ENCODE measurements at regions of chr11 and their contacts with region 1.

Region 1: GRCh38 chr11:48099906-48100446 is 116.6 kb upstream of the OR4B1 start:
- DNase-seq: no peak
- H3K4me3 ChIP-seq: no peak overlapping the region
- H3K27ac ChIP-seq: no peak overlapping the region
- H3K4me1 ChIP-seq: no peaks in the 10 kb centered on the region
- H3K27me3 ChIP-seq: no peaks in the 10 kb centered on the region
- CTCF ChIP-seq: no peak
- POLR2A ChIP-seq: no peak

Region 2: DNA sequence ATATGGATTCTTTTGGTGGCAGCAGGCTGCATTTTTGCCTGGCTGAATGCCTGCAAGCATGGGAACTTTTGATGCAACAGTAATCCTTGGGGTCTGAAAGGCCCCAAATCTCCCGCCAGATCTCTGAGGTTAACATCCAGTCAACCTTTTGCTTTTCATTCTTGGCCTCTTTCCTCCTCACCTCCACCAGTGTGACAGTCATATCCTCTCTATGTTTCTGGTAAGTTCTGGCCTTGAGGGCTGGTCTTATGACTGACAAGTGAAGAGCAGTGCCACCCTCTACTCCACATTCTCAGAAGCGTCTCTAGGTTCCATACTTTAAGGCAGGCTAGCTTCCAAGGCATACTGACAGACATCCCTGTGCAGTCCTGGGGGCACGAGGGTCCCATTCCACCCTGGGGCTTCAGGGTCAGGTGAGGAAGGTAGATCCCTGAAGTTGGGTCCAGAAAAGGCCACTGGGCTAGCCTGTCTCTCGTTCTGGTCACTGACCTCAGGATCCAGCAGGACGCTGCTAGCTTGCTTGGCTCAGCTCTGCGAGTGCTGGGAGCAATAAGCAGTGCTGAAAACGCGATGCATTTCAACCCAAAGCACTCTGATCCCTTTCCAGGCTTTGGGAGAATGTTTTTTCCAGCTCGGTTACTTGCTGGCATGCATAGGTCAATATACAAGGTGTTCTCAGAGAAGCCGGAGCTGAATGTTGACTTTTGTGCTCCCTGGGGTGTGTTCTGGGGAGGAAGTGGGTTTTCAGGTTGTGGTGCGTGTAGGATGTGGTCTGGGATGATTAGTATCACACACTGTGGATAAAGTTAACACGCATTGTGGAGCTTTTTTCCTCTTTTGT is 44.5 kb before region 1 on chr11:
- intact Hi-C with region 1: loop called (anchors 1 kb)
- DNase-seq: peak in 1 of 2 donors; percentile 49
- H3K4me3 ChIP-seq: peak overlapping the region in 1 of 3 donors; percentile 41
- H3K27ac ChIP-seq: peak overlapping the region; percentile 73 to 81
- H3K4me1 ChIP-seq: peaks cover 0 to 10% of the 10 kb centered on the region in 2 donors
- H3K27me3 ChIP-seq: no peaks in the 10 kb centered on the region
- CTCF ChIP-seq: no peak
- POLR2A ChIP-seq: no peak

Region 3: DNA sequence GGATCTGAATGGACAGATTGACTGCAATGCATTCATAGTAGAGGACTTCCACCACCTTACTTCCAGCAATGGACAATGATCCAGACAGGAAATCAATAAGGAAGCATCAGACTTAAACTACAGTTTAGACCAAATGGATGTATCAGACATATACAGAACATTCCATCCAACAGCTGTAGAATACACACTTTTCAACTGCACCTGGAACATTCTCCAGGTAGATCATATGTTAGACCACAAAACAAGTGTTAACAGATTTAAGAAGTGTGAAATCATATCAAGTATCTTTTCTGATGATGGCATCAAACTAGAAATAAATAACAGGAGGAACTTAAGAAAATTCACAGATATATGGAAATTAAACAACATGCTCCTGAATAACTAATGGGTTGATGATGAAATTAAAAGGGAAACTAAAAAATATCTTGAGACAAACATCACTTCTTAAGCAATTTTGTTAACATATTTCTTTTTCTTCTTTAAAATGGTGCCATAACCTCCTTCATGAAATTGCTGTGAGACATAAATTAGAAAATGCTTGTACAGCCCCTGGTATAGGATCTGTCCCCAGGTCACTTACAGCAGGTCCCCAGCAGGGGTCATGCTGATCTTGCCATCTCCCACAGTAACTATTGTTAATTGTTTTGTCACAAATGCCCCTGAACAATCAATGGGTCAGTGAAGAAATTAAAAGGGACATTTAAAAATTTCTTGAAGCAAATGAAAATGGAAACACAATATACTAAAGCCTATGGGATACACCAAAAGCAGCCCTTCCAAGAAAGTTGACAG is 16.7 kb after region 1 on chr11:
- intact Hi-C with region 1: no loop called
- DNase-seq: no peak
- H3K4me3 ChIP-seq: no peak overlapping the region
- H3K27ac ChIP-seq: no peak overlapping the region
- H3K4me1 ChIP-seq: no peaks in the 10 kb centered on the region
- H3K27me3 ChIP-seq: no peaks in the 10 kb centered on the region
- CTCF ChIP-seq: no peak
- POLR2A ChIP-seq: no peak

Measured in breast epithelium (tissue), 4 donors.